MCF 10A (cell line): ENCODE measurements at regions of chr16 and their contacts with region 1.

Region 1: GRCh38 chr16:1954209-1954912 is at the start of gene RPL3L:
- DNase-seq: no peak
- H3K4me3 Mint-ChIP-seq: no peak within 1 kb of the TSS
- H3K27ac Mint-ChIP-seq: no peak within 1 kb of the TSS
- H3K4me1 Mint-ChIP-seq: peaks cover 6% of the 10 kb centered on the region
- H3K27me3 Mint-ChIP-seq: no peaks in the 10 kb centered on the region
- CTCF ChIP-seq: no peak
- total RNA-seq, gene RPL3L: not detected in 2 replicates

Region 2: DNA sequence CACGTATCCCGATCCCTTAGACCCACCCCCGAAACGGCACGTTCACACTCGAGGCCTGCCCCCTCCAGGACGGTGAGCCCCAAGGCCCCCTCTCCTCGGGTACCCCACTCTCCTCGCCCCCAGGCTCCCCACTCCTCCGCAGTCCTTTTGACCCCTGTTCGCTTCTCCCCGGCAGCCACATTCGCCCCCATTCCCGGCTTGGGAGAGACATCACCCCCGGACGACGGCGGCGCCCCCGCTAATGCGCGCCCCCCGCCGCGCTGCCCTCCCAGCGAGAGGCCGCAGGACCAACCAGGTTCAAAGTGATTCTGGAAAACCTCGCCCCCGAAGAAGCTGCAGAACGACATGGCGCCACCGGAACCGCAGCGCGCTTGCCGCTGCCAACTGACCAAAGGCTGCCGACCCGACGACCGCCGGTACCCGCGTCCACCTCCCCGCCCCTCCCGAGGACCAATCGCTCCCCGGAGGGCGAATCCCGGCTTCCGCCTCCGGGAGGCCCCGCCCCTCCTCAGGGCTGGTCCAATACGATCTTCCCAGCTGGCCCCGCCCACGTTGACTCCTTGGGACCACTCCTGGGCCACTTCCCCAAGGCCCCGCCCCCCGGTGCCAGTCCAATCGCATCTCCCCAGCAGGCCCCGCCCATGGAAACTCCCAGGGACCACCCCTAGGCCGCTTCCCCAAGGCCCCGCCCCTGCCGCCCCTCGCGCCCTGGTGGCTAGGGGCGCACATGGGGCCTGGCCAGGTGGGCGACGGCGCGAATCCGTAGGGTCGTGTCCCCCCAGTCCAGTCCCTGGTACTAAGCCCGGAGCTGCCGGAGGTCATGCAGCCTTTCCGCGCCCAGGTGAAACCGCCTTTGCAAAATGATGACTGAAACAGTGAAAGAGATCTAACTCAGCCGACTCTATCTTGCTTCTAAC is 11.3 kb before region 1 on chr16 and contains the start of gene MSRB1:
- CTCF ChIA-PET with region 1: interaction called, 4 read pairs
- POLR2A ChIA-PET with region 1: interaction called, 12 read pairs
- intact Hi-C with region 1: no loop called
- DNase-seq: peak; percentile 99
- H3K4me3 Mint-ChIP-seq: peak within 1 kb of the TSS; percentile 87
- H3K27ac Mint-ChIP-seq: peak within 1 kb of the TSS; percentile 42
- H3K4me1 Mint-ChIP-seq: peaks cover 5% of the 10 kb centered on the region
- H3K27me3 Mint-ChIP-seq: no peaks in the 10 kb centered on the region
- CTCF ChIP-seq: no peak
- total RNA-seq, gene MSRB1: 5.8 and 7.4 TPM in 2 replicates